ENCODE measurements at regions of chr7 and their contacts with region 1.

Region 1: GRCh38 chr7:116929914-116930913 is 23.1 kb upstream of the ST7 start:
- DNase-seq: peak; percentile 77 to 89 (median 86)
- H3K4me3 ChIP-seq: no peak overlapping the region
- H3K27ac ChIP-seq: no peak overlapping the region
- H3K4me1 ChIP-seq: peaks cover 0 to 4% (median 0%) of the 10 kb centered on the region in 3 donors
- H3K27me3 ChIP-seq: no peaks in the 10 kb centered on the region
- CTCF ChIP-seq: peak; percentile 94

Region 2: DNA sequence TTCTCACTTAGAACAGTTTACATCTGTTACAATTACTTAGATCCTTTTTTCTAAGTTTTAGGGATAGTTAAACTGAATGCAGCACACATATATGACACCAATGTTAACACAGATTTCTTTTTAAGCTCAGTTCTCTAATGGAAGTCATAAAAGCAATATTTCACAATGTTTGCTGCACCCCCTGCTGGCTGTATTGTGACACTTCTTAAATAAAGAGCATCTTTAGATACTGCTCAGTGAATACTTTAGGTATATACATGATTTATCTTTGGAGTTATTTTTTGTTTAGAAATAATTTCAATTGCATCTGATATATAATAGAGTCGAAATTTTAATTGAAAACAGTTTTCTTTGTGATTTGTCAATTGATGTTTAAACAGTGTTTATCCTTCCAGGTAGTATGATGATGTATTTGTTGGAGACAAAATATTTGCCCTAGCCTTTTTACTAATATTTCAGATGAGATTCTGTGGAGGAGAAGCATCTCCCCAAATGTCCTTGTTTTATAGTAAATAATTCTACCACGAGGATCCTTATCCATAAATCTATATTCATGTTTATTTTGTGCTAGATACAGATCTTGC is 197.5 kb after region 1 on chr7:
- intact Hi-C with region 1: loop called (anchors 5 kb)
- DNase-seq: peak in 3 of 5 donors; percentile 29 to 83 (median 74)
- H3K4me3 ChIP-seq: no peak overlapping the region
- H3K27ac ChIP-seq: no peak overlapping the region
- H3K4me1 ChIP-seq: peaks cover 3 to 10% (median 8%) of the 10 kb centered on the region in 3 donors
- H3K27me3 ChIP-seq: no peaks in the 10 kb centered on the region
- CTCF ChIP-seq: peak; percentile 62

Region 3: DNA sequence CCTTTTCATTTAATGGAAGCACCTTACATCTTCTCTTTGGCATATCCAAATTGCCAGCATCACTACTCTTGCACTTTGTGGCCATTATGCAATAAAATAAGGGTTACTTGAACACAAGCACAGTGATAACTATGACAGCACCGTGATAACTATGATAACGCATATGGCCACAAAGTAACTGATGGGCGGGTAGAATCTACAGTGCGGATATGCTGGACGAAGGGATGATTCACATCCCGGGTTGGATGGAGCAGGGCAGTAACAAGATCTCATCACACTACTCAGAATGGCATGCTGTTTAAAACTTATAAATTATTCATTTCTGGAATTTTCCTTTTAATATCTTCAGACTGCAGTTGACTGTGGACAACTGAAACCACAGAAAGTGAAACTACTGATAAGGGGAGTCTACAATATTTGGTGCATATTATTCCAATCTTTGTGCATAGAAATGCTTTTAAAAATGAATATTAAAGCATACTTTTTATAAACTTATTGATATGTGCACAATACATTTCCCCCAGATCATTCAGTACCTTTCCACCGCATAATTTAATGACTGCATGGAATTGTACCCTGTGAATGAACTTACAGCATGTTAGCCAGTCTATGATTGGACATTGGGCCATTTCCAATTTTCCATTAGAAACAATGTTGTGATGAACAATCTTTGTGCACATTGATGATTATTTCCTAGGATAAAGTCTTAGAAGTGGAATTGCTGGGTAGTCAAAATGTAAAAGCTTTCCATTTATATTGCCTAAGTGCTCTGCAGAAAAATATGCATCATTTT is 256.2 kb after region 1 on chr7:
- intact Hi-C with region 1: no loop called
- DNase-seq: no peak
- H3K4me3 ChIP-seq: no peak overlapping the region
- H3K27ac ChIP-seq: no peak overlapping the region
- H3K4me1 ChIP-seq: no peaks in the 10 kb centered on the region
- H3K27me3 ChIP-seq: no peaks in the 10 kb centered on the region
- CTCF ChIP-seq: no peak